ENCODE measurements at regions of chr17 and their contacts with region 1.

Region 1: DNA sequence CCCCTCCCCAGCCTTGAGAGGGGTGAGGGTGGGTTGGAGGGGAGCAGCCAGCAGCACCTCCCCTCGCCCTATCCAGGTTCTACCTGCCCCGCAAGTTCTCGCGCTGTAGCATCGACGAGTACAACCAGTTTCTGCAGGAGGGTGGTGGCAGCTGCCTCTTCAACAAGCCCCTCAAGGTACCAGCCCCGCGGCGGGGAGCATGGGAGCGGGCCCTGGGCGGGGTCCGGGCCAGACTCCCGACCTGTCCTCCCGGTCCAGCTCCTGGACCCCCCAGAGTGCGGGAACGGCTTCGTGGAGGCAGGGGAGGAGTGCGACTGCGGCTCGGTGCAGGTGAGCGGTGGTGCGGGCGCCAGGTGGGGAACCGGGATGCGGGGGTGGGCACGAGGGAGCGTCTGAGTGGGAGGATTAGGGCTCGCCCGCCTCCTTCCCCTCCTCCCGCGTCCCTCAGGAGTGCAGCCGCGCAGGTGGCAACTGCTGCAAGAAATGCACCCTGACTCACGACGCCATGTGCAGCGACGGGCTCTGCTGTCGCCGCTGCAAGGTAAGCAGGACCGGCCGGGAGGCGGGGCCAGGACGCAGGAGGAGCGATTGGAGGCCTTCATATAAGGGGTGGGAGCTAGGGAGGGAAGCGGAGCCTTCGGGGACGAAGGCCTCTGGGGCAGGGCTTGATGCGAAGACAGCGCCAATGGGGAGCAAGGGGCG is 16.5 kb downstream of the ADAM11 start:
- DNase-seq: peak; percentile 99
- ATAC-seq: peak; percentile 97
- H3K4me3 Mint-ChIP-seq: peak overlapping the region; percentile 79
- H3K27ac Mint-ChIP-seq: no peak overlapping the region
- H3K4me1 Mint-ChIP-seq: peaks cover 5% of the 10 kb centered on the region
- H3K27me3 Mint-ChIP-seq: peaks cover 6% of the 10 kb centered on the region
- CTCF ChIP-seq: peak; percentile 60

Region 2: DNA sequence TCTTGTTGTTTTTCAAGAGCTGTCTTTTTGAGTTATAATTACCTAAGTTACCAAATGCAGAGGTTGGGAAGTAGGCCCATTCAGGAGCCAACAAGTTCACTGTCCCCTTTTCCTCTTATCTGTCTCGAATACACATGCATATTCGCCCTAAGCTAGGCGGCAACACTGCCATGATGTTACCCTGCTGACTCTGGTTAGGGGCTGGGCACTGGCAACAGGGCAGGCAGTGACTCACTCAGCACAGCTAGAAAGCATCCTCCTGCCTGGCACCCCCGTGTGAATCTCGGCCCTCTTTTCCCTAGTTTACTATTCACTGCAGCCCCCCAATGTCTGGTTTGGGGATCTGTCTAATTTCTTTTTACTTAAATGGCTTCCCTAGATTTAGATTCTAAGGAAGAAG is 53.0 kb before region 1 on chr17:
- CTCF ChIA-PET with region 1: no interaction called
- POLR2A ChIA-PET with region 1: no interaction called
- intact Hi-C with region 1: no loop called
- DNase-seq: no peak
- ATAC-seq: no peak
- H3K4me3 Mint-ChIP-seq: no peak overlapping the region
- H3K27ac Mint-ChIP-seq: no peak overlapping the region
- H3K4me1 Mint-ChIP-seq: no peaks in the 10 kb centered on the region
- H3K27me3 Mint-ChIP-seq: no peaks in the 10 kb centered on the region
- CTCF ChIP-seq: no peak

Region 3: GRCh38 chr17:44792276-44792675 is 17.0 kb after region 1 on chr17:
- CTCF ChIA-PET with region 1: interaction called, 26 read pairs
- POLR2A ChIA-PET with region 1: no interaction called
- intact Hi-C with region 1: no loop called
- DNase-seq: no peak
- ATAC-seq: no peak
- H3K4me3 Mint-ChIP-seq: no peak overlapping the region
- H3K27ac Mint-ChIP-seq: no peak overlapping the region
- H3K4me1 Mint-ChIP-seq: peaks cover 4% of the 10 kb centered on the region
- H3K27me3 Mint-ChIP-seq: no peaks in the 10 kb centered on the region
- CTCF ChIP-seq: no peak

Region 4: DNA sequence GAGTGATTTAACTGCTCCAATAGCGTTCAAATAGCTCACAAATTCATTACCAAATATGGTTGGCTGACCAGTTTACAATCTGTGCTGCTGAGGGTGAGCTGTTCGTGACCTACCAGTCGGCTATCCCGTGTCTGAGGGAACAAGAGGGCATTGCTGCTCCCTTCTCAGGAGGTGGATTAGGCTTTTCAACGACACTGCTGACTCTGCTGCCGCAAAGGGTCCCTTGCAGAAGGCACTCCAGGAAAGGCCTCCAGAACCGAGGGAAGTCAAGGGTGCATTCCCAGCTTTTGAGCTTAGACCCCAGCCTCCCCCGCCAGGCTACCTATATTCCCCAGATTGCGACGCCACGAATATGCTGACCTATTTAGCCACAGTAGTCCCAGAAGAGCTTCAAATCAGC is 22.5 kb after region 1 on chr17:
- CTCF ChIA-PET with region 1: interaction called, 26 read pairs
- POLR2A ChIA-PET with region 1: no interaction called
- intact Hi-C with region 1: no loop called
- DNase-seq: no peak
- ATAC-seq: no peak
- H3K4me3 Mint-ChIP-seq: no peak overlapping the region
- H3K27ac Mint-ChIP-seq: no peak overlapping the region
- H3K4me1 Mint-ChIP-seq: peaks cover 4% of the 10 kb centered on the region
- H3K27me3 Mint-ChIP-seq: no peaks in the 10 kb centered on the region
- CTCF ChIP-seq: no peak

Region 5: GRCh38 chr17:44829523-44830358 is 54.5 kb after region 1 on chr17 and contains the start of gene GJC1:
- CTCF ChIA-PET with region 1: interaction called, 11 read pairs
- POLR2A ChIA-PET with region 1: no interaction called
- intact Hi-C with region 1: no loop called
- DNase-seq: peak; percentile 28
- ATAC-seq: peak; percentile 70
- H3K4me3 Mint-ChIP-seq: peak within 1 kb of the TSS; percentile 76
- H3K27ac Mint-ChIP-seq: peak within 1 kb of the TSS; percentile 6
- H3K4me1 Mint-ChIP-seq: peaks cover 9% of the 10 kb centered on the region
- H3K27me3 Mint-ChIP-seq: peaks cover 44% of the 10 kb centered on the region
- CTCF ChIP-seq: no peak
- total RNA-seq, gene GJC1: 5.6 TPM

Region 6: DNA sequence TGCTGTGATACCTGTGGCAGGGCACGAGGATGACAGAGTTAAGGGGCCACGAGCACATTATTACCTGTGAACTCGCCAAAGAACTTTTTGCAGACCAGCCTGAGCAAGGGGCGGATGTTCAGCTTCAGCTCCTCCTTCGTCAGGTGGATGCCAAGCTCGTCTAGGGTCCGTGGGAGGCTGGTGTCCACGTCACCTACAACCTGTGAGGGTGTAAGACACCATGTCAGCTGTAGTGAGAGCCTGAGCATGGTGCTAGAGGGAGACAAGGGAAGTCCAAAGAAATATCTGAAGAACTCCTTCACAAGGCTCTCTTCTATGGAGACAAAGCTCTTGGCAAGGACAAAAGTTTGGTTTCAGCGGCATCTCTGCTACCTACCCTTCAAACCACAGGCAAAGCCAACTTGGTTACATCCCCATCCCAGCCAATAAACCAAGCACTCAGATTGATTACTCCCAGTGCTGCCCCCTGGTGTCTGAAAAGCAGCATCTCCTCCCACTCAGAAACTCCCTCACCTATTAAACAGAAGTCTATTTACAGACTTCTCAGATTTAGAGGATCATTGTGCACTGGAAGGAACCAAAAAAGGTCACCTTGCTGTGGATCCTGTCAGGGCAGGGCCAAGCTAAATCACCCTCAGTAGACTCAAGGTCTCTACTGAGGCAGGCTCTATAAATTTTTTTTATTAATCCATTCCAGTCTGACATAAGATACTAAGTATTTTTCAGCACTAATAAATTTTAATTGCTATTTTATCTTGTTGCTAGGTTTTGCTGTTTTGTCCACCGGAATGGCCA is 89.8 kb after region 1 on chr17:
- CTCF ChIA-PET with region 1: interaction called, 205 read pairs
- POLR2A ChIA-PET with region 1: interaction called, 7 read pairs
- intact Hi-C with region 1: loop called (anchors 2 kb)
- DNase-seq: peak; percentile 79
- ATAC-seq: peak; percentile 80
- H3K4me3 Mint-ChIP-seq: no peak overlapping the region
- H3K27ac Mint-ChIP-seq: no peak overlapping the region
- H3K4me1 Mint-ChIP-seq: no peaks in the 10 kb centered on the region
- H3K27me3 Mint-ChIP-seq: no peaks in the 10 kb centered on the region
- CTCF ChIP-seq: peak; percentile 67

Region 7: GRCh38 chr17:44878627-44879221 is 103.4 kb after region 1 on chr17:
- CTCF ChIA-PET with region 1: interaction called, 35 read pairs
- POLR2A ChIA-PET with region 1: interaction called, 3 read pairs
- intact Hi-C with region 1: no loop called
- DNase-seq: peak; percentile 48
- ATAC-seq: no peak
- H3K4me3 Mint-ChIP-seq: no peak overlapping the region
- H3K27ac Mint-ChIP-seq: no peak overlapping the region
- H3K4me1 Mint-ChIP-seq: no peaks in the 10 kb centered on the region
- H3K27me3 Mint-ChIP-seq: no peaks in the 10 kb centered on the region
- CTCF ChIP-seq: peak; percentile 49